H1 (cell line): ENCODE measurements at regions of chr6 and their contacts with region 1.

Region 1: GRCh38 chr6:28383235-28384142 is 16.1 kb downstream of the ZSCAN12 start:
- DNase-seq: peak; percentile 87 to 94
- H3K4me3 ChIP-seq: peak overlapping the region; percentile 52 to 68 (median 61)
- H3K27ac ChIP-seq: peak overlapping the region; percentile 41; the same call in 1 of the 2 replicates
- H3K4me1 ChIP-seq: peaks cover 0 to 3% (median 1%) of the 10 kb centered on the region in 4 experiments; a peak in 3 of 7 replicates
- H3K27me3 ChIP-seq: no peaks in the 10 kb centered on the region
- CTCF ChIP-seq: peak; percentile 33 to 61 (median 46)
- EP300 ChIP-seq: no peak; a peak in 1 of 3 replicates
- POLR2A ChIP-seq: peak; percentile 76 to 83
- RAD21 ChIP-seq: peak; percentile 53; a peak in 3 of 4 replicates

Region 2: GRCh38 chr6:28371706-28372451 is 11.6 kb before region 1 on chr6:
- CTCF ChIA-PET with region 1: interaction called, 11 read pairs
- POLR2A ChIA-PET with region 1: interaction called, 6 read pairs
- DNase-seq: no peak
- H3K4me3 ChIP-seq: no peak overlapping the region
- H3K27ac ChIP-seq: no peak overlapping the region
- H3K4me1 ChIP-seq: no peaks in the 10 kb centered on the region
- H3K27me3 ChIP-seq: no peaks in the 10 kb centered on the region
- CTCF ChIP-seq: no peak
- EP300 ChIP-seq: no peak
- POLR2A ChIP-seq: no peak
- RAD21 ChIP-seq: no peak

Region 3: GRCh38 chr6:28393911-28394662 is 10.6 kb after region 1 on chr6:
- CTCF ChIA-PET with region 1: interaction called, 12 read pairs
- POLR2A ChIA-PET with region 1: interaction called, 62 read pairs
- DNase-seq: no peak
- H3K4me3 ChIP-seq: no peak overlapping the region
- H3K27ac ChIP-seq: no peak overlapping the region
- H3K4me1 ChIP-seq: peaks cover 0 to 2% (median 0%) of the 10 kb centered on the region in 4 experiments; a peak in 3 of 7 replicates
- H3K27me3 ChIP-seq: no peaks in the 10 kb centered on the region
- CTCF ChIP-seq: peak in 1 of 3 experiments; percentile 29; a peak in 2 of 4 replicates
- EP300 ChIP-seq: no peak
- POLR2A ChIP-seq: no peak
- RAD21 ChIP-seq: peak in 1 of 2 experiments; percentile 2; a peak in 2 of 4 replicates

Region 4: DNA sequence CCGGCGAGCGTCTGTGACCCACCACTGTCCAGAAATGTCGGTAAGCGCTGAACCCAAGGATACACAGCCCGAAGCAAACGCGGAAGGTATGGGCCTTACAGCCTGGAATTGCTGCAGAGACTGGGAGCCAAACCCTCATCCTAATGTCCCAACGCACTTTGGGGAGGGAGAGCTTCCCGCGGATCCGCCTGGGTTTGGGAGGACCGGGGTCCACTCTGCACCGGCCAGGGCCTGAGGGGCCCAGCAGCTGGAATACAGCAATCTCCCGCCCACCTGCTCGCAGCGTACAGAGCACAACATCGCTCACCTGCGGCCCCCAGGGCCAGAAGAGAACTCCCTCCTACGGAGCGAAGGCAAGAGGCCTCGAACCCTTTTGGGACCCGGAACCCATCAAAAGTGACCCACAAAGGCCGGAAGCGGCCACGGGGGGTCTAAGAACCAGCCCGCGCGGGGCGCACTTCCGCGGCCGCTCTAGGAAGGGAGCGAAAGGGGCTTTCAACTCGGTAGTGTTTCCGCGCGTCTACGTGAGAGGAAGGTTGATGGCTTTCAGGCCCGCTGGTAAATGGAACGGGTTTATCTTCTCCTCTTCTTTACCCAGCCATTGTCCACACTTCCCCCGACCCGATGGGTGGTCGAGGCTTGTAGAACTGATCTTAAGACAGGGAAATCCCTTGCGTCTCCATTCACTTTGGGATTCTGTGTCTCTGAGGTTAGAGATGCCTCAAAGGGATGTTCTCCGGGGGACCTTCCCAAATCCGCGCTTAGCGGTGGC is 16.0 kb after region 1 on chr6 and contains the start of gene ZSCAN12:
- CTCF ChIA-PET with region 1: interaction called, 12 read pairs
- POLR2A ChIA-PET with region 1: interaction called, 62 read pairs
- DNase-seq: peak; percentile 62 to 91
- H3K4me3 ChIP-seq: peak within 1 kb of the TSS; percentile 67 to 97 (median 93)
- H3K27ac ChIP-seq: peak within 1 kb of the TSS; percentile 80
- H3K4me1 ChIP-seq: peaks cover 0 to 2% (median 0%) of the 10 kb centered on the region in 4 experiments; a peak in 4 of 7 replicates
- H3K27me3 ChIP-seq: peaks cover 0 to 3% (median 0%) of the 10 kb centered on the region in 4 experiments; a peak in 2 of 7 replicates
- CTCF ChIP-seq: peak; percentile 43 to 54 (median 45)
- EP300 ChIP-seq: peak in 1 of 2 experiments; percentile 62; a peak in 1 of 3 replicates
- POLR2A ChIP-seq: peak; percentile 74 to 92
- RAD21 ChIP-seq: peak in 1 of 2 experiments; percentile 30; a peak in 1 of 4 replicates
- total RNA-seq, gene ZSCAN12: 8.6 and 9.6 TPM in 2 replicates